Activated CD4-positive, alpha-beta memory T cell treated with anti-CD3 and anti-CD28 coated beads for 36 hours (primary cell): ENCODE measurements at regions of chr7 and their contacts with region 1.

Region 1: DNA sequence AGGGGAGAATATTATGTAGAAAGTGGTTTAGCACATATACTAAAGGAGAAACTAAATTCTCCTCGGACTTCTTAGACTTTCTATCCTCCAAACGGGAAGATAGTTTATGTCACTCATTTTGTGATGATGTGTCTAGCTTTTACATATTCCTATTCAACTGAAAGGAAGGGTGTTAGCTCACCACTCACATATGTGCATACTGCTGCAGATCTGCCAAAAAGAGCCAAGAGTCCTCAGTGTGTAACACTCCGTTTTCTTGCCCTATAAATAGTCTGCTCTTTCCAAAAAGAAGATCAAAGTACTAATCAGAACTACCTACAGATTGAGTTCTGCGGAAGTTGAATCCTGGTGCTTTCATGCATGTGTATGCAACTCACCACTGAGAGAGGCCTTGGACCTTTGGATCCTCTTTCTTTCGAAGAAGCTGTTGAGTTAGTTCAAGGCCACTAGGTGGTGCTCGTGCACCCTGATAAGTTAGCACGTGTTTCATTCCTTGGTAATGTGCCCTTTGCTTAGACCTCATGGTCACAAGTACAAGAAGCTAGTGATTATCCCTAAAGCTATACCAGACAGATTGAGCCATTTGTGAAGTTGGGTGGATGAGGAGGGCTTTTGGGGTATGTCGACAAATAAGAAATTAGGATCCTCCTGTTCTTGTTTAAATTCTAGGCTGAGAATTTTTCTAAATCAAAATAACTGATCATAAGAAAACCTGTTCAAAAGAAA is 14.1 kb downstream of the YAE1 start:
- DNase-seq: peak; percentile 83
- H3K4me3 Mint-ChIP-seq: no peak overlapping the region
- H3K27ac Mint-ChIP-seq: no peak overlapping the region
- H3K4me1 Mint-ChIP-seq: peaks cover 8% of the 10 kb centered on the region
- H3K27me3 Mint-ChIP-seq: no peaks in the 10 kb centered on the region

Region 2: GRCh38 chr7:39488467-39489393 is 91.6 kb before region 1 on chr7:
- CTCF ChIA-PET with region 1: no interaction called
- POLR2A ChIA-PET with region 1: no interaction called
- intact Hi-C with region 1: no loop called
- DNase-seq: no peak
- H3K4me3 Mint-ChIP-seq: no peak overlapping the region
- H3K27ac Mint-ChIP-seq: no peak overlapping the region
- H3K4me1 Mint-ChIP-seq: no peaks in the 10 kb centered on the region
- H3K27me3 Mint-ChIP-seq: peaks cover 25% of the 10 kb centered on the region

Region 3: DNA sequence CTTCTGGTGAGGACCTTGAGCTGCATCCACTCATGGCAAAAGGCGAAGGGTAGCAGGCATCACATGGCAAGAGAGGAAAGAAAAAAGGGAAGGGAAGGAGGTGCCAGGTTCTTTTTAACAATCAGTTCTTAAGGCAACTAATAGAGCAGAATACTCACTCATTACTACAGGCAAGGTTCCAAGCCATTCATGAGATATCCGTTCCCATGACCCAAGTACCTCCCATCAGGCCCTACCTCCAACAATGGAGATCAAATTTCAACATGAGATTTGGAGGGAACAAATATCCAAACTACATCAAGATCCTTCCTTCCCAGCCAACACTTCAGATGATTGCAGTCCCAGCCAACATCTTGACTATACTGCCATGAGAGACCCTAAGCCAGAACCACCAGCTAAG is 53.0 kb before region 1 on chr7:
- CTCF ChIA-PET with region 1: no interaction called
- POLR2A ChIA-PET with region 1: no interaction called
- intact Hi-C with region 1: no loop called
- DNase-seq: no peak
- H3K4me3 Mint-ChIP-seq: no peak overlapping the region
- H3K27ac Mint-ChIP-seq: no peak overlapping the region
- H3K4me1 Mint-ChIP-seq: no peaks in the 10 kb centered on the region
- H3K27me3 Mint-ChIP-seq: peaks cover 2% of the 10 kb centered on the region

Region 4: GRCh38 chr7:39609113-39609934 is 29.0 kb after region 1 on chr7:
- CTCF ChIA-PET with region 1: interaction called, 14 read pairs
- POLR2A ChIA-PET with region 1: no interaction called
- intact Hi-C with region 1: no loop called
- DNase-seq: peak; percentile 21
- H3K4me3 Mint-ChIP-seq: peak overlapping the region; percentile 31
- H3K27ac Mint-ChIP-seq: peak overlapping the region; percentile 49
- H3K4me1 Mint-ChIP-seq: peaks cover 41% of the 10 kb centered on the region
- H3K27me3 Mint-ChIP-seq: peaks cover 8% of the 10 kb centered on the region

Region 5: DNA sequence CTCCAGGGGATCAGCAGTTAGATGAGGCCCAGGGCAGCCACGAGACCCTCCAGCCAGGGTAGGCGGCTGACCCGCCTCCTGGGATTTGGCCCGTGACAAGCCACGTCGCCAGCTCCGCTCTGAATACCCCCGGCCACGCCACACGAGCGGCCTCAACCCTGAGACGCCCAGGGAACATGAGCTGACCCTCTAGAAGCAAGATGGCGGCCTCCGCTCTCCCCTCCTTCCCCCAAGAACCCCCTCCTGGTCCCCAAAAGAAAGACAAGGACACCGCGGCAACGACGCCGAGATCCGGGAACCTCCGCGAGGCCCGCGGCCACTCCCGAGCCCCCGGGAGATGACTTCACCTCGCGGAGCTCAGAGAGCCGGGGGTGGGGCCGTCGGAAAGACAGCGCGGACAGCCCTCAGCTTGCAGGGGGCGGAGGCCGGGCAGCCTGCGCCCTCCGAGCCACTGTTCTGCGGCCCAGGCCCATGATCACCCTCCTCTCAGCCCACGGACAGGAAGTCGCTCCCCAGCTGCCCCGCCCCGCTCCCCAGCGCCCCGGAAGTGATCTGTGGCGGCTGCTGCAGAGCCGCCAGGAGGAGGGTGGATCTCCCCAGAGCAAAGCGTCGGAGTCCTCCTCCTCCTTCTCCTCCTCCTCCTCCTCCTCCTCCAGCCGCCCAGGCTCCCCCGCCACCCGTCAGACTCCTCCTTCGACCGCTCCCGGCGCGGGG is 42.9 kb after region 1 on chr7 and contains the start of gene RALA:
- CTCF ChIA-PET with region 1: interaction called, 53 read pairs
- POLR2A ChIA-PET with region 1: interaction called, 7 read pairs
- intact Hi-C with region 1: loop called (anchors 2 kb)
- DNase-seq: peak; percentile 94
- H3K4me3 Mint-ChIP-seq: peak within 1 kb of the TSS; percentile 90
- H3K27ac Mint-ChIP-seq: peak within 1 kb of the TSS; percentile 87
- H3K4me1 Mint-ChIP-seq: peaks cover 45% of the 10 kb centered on the region
- H3K27me3 Mint-ChIP-seq: no peaks in the 10 kb centered on the region
- total RNA-seq, gene RALA: 27.1 to 31.4 TPM

Region 6: DNA sequence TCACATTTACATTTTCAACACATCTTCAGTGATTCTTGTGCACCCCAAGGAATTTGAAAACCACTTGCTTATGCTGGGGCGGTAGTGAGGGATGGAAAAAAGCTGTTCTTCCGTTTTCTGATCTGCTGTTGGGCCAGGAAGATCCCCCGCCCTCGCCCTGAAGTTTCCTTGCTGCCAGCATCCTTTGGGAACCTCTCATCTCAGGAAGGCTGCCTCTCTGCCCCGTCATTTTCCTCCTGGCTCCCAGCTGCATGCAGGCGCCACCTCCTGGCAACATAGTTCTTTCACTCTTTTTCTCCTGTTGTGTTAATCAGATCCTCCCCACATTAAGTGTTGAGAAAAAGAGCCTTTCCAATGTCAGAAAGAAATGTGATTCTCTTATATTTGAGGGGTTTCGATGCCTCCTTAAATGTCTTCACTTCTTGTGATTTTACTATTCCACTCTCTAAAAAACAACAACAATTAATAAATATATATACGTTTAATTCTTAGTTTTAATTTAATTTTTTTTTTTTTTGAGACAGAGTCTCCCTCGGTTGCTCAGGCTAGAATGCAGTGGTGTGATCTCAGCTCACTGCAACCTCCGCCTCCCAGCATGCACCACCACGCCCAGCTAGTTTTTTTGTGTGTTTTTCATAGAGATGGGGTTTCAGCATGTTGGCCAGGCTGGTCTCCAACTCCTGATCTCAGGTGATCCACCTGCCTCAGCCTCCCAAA is 165.9 kb after region 1 on chr7:
- CTCF ChIA-PET with region 1: interaction called, 520 read pairs
- POLR2A ChIA-PET with region 1: no interaction called
- intact Hi-C with region 1: loop called (anchors 1 kb)
- DNase-seq: peak; percentile 69
- H3K4me3 Mint-ChIP-seq: no peak overlapping the region
- H3K27ac Mint-ChIP-seq: no peak overlapping the region
- H3K4me1 Mint-ChIP-seq: peaks cover 9% of the 10 kb centered on the region
- H3K27me3 Mint-ChIP-seq: no peaks in the 10 kb centered on the region

Region 7: GRCh38 chr7:40057292-40057691 is 477.0 kb after region 1 on chr7:
- CTCF ChIA-PET with region 1: interaction called, 27 read pairs
- POLR2A ChIA-PET with region 1: no interaction called
- intact Hi-C with region 1: loop called (anchors 5 kb)
- DNase-seq: no peak
- H3K4me3 Mint-ChIP-seq: no peak overlapping the region
- H3K27ac Mint-ChIP-seq: no peak overlapping the region
- H3K4me1 Mint-ChIP-seq: peaks cover 3% of the 10 kb centered on the region
- H3K27me3 Mint-ChIP-seq: no peaks in the 10 kb centered on the region